Prostate gland (tissue), 2 donors: ENCODE measurements at regions of chr6 and their contacts with region 1.

Region 1: DNA sequence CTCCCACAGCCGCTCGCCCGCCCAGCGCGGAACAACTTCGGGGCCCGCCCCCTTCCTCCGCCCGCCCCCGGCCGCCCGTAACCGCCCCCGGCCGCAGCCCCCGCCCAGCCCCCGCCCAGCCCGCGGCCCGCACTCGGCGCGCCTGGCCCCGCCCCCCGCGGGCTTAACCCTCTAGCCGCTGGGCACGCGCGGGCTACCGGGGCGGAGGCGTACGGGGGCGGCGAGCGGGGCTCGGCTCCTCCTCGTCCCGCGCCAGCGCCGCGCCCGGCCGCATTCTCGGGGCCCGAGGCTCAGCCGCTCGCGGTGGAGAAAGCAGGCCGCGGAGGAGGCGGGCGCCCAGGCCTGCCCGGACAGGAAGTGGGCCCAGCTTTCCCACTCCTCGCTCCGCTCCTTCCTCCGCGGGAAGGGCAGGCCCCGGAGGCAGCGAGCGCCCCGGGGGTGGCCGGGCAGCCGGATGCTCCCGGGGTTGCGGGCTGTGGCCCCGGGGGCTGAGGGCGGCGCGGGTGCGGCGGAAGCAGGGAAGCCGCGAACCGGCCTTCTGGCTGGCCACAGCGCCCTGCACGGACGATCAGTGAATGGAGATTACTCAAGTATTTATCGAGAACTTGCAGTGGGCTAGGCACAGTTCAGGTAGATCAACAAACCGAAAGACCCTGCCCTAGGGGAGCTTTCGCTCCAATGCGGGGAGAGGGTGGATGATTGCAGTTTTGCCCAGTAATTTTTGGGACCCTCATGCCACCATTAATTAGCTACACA is at the start of gene TRAM2:
- DNase-seq: peak; percentile 74
- H3K4me3 ChIP-seq: peak within 1 kb of the TSS; percentile 73 to 88
- H3K27ac ChIP-seq: peak within 1 kb of the TSS; percentile 93 to 98
- H3K4me1 ChIP-seq: no peaks in the 10 kb centered on the region
- H3K27me3 ChIP-seq: no peaks in the 10 kb centered on the region
- CTCF ChIP-seq: peak in 1 of 4 experiments; percentile 26
- POLR2A ChIP-seq: peak; percentile 49
- total RNA-seq, gene TRAM2: 7.2 to 22.4 TPM

Region 2: DNA sequence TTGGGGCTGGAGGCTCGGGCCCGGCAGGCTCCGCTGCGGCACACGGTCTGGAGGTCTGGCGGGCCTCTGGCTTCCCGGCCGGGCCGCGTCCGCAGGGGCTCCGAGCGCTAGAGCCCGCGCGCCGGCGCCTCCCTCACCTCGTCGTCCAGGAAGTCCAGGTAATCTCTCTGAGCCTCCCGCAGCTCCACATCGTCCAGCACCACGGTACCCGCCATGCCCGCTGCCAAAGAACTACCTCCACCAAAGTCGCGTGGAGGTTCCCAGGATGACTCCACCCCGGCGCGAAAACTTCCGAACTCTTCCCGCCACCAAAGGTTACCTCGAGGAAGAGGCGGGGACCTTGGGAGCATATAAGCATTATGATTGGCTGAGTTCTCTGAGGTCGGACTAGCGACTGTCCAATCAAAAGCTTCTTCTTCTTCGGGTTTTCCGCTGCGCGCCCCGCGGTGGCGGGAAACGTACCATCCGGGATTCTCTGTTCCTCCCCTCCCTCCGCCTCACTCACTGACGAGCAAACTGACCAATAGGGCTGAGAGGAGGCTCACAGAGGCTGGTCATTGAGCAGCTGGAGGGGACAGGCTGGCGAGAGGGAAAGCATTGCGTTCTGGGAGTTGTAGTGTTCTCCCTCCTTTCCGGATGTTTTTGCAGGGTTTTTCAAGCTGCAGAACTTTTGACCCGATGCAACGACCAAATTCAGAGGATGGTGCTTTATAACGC is 292.6 kb before region 1 on chr6 and contains the start of gene MCM3:
- intact Hi-C with region 1: loop called (anchors 10 kb)
- DNase-seq: peak; percentile 98
- H3K4me3 ChIP-seq: peak within 1 kb of the TSS; percentile 63 to 67
- H3K27ac ChIP-seq: peak within 1 kb of the TSS; percentile 45 to 51
- H3K4me1 ChIP-seq: no peaks in the 10 kb centered on the region
- H3K27me3 ChIP-seq: no peaks in the 10 kb centered on the region
- CTCF ChIP-seq: peak in 2 of 4 experiments; percentile 49 to 62
- POLR2A ChIP-seq: peak; percentile 17
- total RNA-seq, gene MCM3: 33.6 to 51.1 TPM

Region 3: DNA sequence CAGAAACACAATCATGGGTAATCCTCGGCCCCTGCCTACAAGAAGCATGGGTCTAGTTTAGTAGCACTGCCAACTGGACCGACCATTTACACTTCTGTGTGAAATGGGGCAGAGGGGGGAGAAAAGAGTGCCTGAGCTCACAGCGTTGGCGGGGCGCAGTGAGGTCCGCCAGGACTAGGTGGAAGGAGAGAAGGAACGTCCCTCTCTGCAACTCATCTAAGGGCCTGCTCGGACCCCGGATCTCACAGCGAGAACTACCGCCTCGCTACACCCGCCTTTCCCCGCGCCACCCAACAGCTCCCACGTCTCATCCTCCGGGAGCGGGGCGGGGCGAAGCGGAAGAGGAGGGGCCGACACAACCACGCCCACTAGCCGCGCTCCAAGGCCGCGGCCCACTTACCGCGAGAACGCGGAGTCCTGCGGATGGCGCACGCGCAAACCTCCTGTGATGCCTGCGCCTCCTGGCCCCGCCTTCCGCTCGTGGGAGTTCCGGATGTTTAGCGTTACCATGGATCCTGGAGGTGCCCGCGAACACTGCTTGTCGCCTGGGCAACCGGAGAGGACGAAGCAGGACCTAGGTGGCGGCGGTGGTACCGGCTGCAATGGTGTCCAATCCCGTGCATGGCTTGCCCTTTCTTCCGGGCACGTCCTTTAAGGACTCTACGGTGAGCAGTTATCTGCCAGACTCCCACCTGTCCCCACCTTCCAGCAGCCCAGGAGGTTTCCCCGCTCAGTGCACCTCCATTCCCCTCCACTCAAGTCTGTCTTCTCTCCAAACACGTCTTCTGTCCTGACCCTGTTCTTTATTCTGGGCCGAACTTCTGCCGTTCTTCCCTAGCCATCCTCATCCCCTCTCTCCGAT is 157.2 kb before region 1 on chr6 and contains the start of gene EFHC1:
- intact Hi-C with region 1: loop called (anchors 1 kb)
- DNase-seq: peak; percentile 98
- H3K4me3 ChIP-seq: peak within 1 kb of the TSS; percentile 45 to 65
- H3K27ac ChIP-seq: peak within 1 kb of the TSS; percentile 76 to 81
- H3K4me1 ChIP-seq: no peaks in the 10 kb centered on the region
- H3K27me3 ChIP-seq: no peaks in the 10 kb centered on the region
- CTCF ChIP-seq: peak in 1 of 4 experiments; percentile 3
- POLR2A ChIP-seq: peak; percentile 81
- total RNA-seq, gene EFHC1: 19.4 to 23.5 TPM

Region 4: DNA sequence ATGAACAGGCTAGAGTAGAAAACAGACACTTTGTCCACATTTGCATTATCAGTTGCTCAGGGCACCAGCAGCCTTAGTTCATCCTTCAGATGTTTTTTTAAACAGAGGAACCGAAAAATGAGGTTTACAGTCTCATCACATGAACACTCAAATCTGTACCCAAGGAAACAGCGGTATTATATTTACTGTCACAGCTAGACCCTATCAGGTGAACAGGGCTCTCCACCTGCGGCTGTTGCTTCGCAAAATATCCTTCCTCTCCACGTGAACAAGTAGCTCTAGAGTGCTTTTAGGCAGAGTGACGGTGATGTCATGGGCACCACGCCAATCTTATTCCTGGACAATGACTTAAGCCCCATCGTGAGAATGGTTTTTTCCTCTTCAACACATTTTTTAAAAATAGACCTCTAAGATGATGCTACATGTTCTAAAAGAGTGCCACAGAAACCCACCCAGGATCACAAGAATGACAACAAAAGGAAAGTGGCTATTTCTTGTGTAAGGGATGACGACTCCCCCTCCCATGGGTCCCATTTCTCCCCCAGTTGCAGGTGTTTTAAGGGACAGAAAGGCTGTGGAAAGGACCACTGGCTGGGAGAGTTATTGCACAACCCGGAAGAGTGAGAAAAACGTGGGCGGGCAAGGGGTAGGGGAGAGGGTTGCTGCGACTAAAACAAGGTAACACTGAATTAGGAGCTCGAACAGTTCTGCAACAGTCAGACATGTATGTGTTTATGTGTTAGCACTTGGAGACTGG is 79.4 kb before region 1 on chr6:
- intact Hi-C with region 1: loop called (anchors 5 kb)
- DNase-seq: no peak
- H3K4me3 ChIP-seq: no peak overlapping the region
- H3K27ac ChIP-seq: no peak overlapping the region
- H3K4me1 ChIP-seq: no peaks in the 10 kb centered on the region
- H3K27me3 ChIP-seq: no peaks in the 10 kb centered on the region
- CTCF ChIP-seq: no peak
- POLR2A ChIP-seq: no peak

Region 5: DNA sequence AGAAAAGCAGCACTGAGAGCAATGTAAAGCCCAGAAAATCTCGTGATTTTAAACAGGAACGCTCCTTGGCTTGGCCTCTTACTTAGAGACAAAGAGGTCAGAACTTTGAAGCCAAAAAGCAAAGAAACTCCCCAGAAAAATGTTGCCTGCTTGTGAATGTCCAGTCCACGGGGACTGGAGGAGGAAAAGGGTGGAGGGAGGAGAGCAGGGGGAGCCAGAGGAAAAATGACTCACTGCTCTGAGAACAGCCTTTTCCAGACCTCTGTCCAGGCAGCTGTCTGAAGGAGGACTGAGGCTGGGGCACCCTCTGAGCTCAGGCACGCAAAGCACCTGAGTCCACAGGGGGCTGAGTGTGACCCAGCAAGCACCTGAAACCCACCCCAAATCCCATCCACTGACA is 65.0 kb before region 1 on chr6:
- intact Hi-C with region 1: loop called (anchors 5 kb)
- DNase-seq: no peak
- H3K4me3 ChIP-seq: no peak overlapping the region
- H3K27ac ChIP-seq: peak overlapping the region; percentile 17 to 23
- H3K4me1 ChIP-seq: no peaks in the 10 kb centered on the region
- H3K27me3 ChIP-seq: no peaks in the 10 kb centered on the region
- CTCF ChIP-seq: no peak
- POLR2A ChIP-seq: no peak

Region 6: GRCh38 chr6:52612336-52613054 is 35.3 kb after region 1 on chr6:
- intact Hi-C with region 1: no loop called
- DNase-seq: no peak
- H3K4me3 ChIP-seq: no peak overlapping the region
- H3K27ac ChIP-seq: no peak overlapping the region
- H3K4me1 ChIP-seq: no peaks in the 10 kb centered on the region
- H3K27me3 ChIP-seq: no peaks in the 10 kb centered on the region
- CTCF ChIP-seq: no peak
- POLR2A ChIP-seq: no peak

Region 7: GRCh38 chr6:52664186-52664990 is 87.2 kb after region 1 on chr6:
- intact Hi-C with region 1: loop called (anchors 10 kb)
- DNase-seq: peak; percentile 91
- H3K4me3 ChIP-seq: peak overlapping the region; percentile 55 to 64
- H3K27ac ChIP-seq: peak overlapping the region; percentile 39 to 75
- H3K4me1 ChIP-seq: no peaks in the 10 kb centered on the region
- H3K27me3 ChIP-seq: no peaks in the 10 kb centered on the region
- CTCF ChIP-seq: no peak
- POLR2A ChIP-seq: peak; percentile 92

Region 8: DNA sequence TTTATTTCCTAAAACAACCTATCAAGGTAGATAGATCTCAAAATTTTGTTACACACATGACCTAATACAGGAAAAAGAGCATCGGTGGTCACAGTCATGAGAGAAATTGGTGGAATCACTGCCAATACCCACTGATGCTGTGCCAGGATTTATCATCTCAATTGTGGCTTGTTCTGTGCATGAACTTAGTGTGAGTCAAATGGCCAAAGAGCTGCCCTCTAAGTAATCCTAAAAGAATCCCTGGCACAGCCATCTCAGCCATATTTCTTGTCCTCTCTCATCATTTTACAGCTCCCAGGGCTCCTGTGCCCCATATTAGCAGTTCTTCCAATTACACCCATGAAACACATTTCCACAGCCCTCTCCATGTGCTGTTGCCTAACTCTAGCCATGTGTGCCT is 257.3 kb after region 1 on chr6:
- intact Hi-C with region 1: no loop called
- DNase-seq: no peak
- H3K4me3 ChIP-seq: no peak overlapping the region
- H3K27ac ChIP-seq: no peak overlapping the region
- H3K4me1 ChIP-seq: no peaks in the 10 kb centered on the region
- H3K27me3 ChIP-seq: no peaks in the 10 kb centered on the region
- CTCF ChIP-seq: no peak
- POLR2A ChIP-seq: no peak